ENCODE measurements at regions of chr16 and their contacts with region 1.

Region 1: DNA sequence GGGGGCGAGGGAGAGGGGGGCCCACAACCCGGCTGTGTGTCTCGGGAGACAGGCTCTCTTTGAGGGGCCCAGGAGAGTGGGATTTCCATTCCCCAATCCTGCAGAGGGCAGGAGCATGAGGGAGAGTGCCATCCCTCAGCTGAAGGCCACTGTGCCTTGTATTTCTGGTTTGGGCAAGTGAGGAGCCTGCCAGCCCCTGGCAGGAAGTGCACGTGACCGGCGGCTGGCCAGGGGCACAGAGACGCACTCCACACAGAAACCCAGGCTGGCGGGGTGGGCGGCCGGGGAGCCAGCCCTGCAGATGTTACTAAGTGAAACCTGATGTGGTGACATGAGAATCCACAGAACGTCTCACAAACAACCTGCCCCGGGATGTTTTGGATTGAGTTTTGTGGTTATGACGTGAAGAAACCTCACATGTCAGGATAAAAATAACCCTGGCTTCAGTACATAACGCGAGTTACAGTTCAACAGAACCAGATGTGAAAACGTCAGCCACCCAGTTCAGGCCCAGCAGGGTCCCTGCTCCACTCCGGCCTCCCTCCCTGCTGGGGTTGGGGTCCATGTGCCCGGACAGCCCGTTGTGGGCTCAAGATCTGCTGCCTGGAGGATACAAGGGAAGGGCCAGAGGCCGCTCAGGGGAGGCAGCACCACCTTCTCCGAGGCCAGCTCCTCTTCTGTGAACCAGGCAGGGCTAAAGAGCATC is 51.7 kb upstream of the MTSS2 start:
- DNase-seq: no peak
- ATAC-seq: no peak
- H3K4me3 ChIP-seq: no peak overlapping the region
- H3K27ac ChIP-seq: peak overlapping the region in 1 of 2 experiments; percentile 63; a peak in 3 of 6 replicates
- H3K4me1 ChIP-seq: peaks cover 17% of the 10 kb centered on the region
- CTCF ChIP-seq: no peak
- EP300 ChIP-seq: no peak
- POLR2A ChIP-seq: no peak
- RAD21 ChIP-seq: no peak

Region 2: DNA sequence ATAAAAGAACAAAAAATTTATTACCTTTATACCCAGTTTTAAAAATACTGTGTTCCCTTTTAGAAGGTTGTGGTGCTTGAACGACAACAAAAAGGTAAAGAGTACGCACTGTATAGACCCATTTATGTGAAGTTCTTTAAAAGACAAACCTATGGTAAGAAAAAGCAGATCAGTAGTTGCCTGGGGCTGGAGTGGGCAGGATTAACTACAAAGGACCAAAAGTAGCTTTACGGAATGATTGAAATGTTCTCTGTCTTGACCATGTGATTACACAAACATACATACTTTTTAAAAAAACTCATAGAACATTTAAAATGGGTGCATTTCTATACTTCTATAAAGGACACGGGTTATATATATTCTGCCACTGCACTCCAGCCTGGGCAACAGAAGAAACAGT is 1160.1 kb before region 1 on chr16:
- CTCF ChIA-PET with region 1: no interaction called
- POLR2A ChIA-PET with region 1: no interaction called
- DNase-seq: no peak
- ATAC-seq: peak in 1 of 2 experiments; percentile 42; a peak in 3 of 6 replicates
- H3K4me3 ChIP-seq: no peak overlapping the region
- H3K27ac ChIP-seq: no peak overlapping the region
- H3K4me1 ChIP-seq: peaks cover 48% of the 10 kb centered on the region
- CTCF ChIP-seq: no peak
- EP300 ChIP-seq: no peak
- POLR2A ChIP-seq: no peak
- RAD21 ChIP-seq: no peak

Region 3: GRCh38 chr16:70582290-70582978 is 155.1 kb before region 1 on chr16:
- CTCF ChIA-PET with region 1: no interaction called
- POLR2A ChIA-PET with region 1: no interaction called
- DNase-seq: no peak
- ATAC-seq: peak in 1 of 2 experiments; percentile 11; a peak in 3 of 6 replicates
- H3K4me3 ChIP-seq: no peak overlapping the region
- H3K27ac ChIP-seq: no peak overlapping the region
- H3K4me1 ChIP-seq: no peaks in the 10 kb centered on the region
- CTCF ChIP-seq: no peak
- EP300 ChIP-seq: no peak
- POLR2A ChIP-seq: no peak
- RAD21 ChIP-seq: no peak

Region 4: GRCh38 chr16:70594576-70594975 is 143.0 kb before region 1 on chr16:
- CTCF ChIA-PET with region 1: no interaction called
- POLR2A ChIA-PET with region 1: no interaction called
- DNase-seq: no peak
- ATAC-seq: no peak
- H3K4me3 ChIP-seq: no peak overlapping the region
- H3K27ac ChIP-seq: no peak overlapping the region
- H3K4me1 ChIP-seq: peaks cover 14% of the 10 kb centered on the region
- CTCF ChIP-seq: no peak
- EP300 ChIP-seq: no peak
- POLR2A ChIP-seq: no peak
- RAD21 ChIP-seq: no peak

Region 5: GRCh38 chr16:70610273-70611223 is 127.0 kb before region 1 on chr16:
- CTCF ChIA-PET with region 1: no interaction called
- POLR2A ChIA-PET with region 1: no interaction called
- DNase-seq: no peak
- ATAC-seq: peak; percentile 38 to 56; a peak in 2 of 6 replicates
- H3K4me3 ChIP-seq: no peak overlapping the region
- H3K27ac ChIP-seq: no peak overlapping the region
- H3K4me1 ChIP-seq: no peaks in the 10 kb centered on the region
- CTCF ChIP-seq: no peak
- EP300 ChIP-seq: no peak
- POLR2A ChIP-seq: no peak
- RAD21 ChIP-seq: no peak

Region 6: DNA sequence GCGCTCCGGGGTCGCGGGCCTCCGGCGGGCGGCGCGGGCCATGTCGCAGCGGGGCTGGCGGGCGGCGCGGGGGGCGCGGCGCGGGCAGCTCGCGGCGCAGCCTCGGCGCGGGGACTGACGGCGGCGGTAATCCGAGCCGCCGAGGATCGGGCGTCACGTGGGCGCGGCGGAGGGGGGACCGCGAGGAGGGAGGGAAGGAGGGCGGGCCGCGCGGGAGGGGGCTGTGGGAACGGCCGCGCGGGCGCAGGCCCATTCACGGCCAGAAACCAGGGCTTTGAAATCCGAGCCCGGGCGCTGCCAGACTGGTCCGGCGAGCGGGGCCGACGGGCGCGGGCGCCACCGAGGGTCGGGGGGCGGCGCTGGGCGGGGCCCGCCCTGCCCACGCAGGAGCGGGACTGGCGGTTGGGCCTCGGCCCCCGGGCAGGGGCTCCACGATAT is 51.6 kb before region 1 on chr16 and contains the start of gene MTSS2:
- CTCF ChIA-PET with region 1: interaction called, 88 read pairs
- POLR2A ChIA-PET with region 1: interaction called, 3 read pairs
- DNase-seq: peak; percentile 71 to 72
- ATAC-seq: peak; percentile 41 to 51
- H3K4me3 ChIP-seq: peak within 1 kb of the TSS; percentile 84
- H3K27ac ChIP-seq: peak within 1 kb of the TSS; percentile 92 to 97
- H3K4me1 ChIP-seq: peaks cover 84% of the 10 kb centered on the region
- CTCF ChIP-seq: no peak
- EP300 ChIP-seq: no peak
- POLR2A ChIP-seq: peak; percentile 25
- RAD21 ChIP-seq: 0 out of 5 replicates have a peak, but pooled peaks of 1 of the 2 experiments have one; percentile 21
- polyA plus RNA-seq, gene MTSS2: 10.8 and 13.1 TPM in 2 replicates

Region 7: GRCh38 chr16:70691223-70692129 is 46.1 kb before region 1 on chr16:
- CTCF ChIA-PET with region 1: interaction called, 26 read pairs
- POLR2A ChIA-PET with region 1: interaction called, 3 read pairs
- DNase-seq: peak in 1 of 2 experiments; percentile 67
- ATAC-seq: no peak; a peak in 1 of 6 replicates
- H3K4me3 ChIP-seq: no peak overlapping the region
- H3K27ac ChIP-seq: peak overlapping the region; percentile 97 to 100
- H3K4me1 ChIP-seq: peaks cover 97% of the 10 kb centered on the region
- CTCF ChIP-seq: no peak
- EP300 ChIP-seq: no peak
- POLR2A ChIP-seq: no peak
- RAD21 ChIP-seq: no peak

Measured in A549 (cell line).